K562 (cell line): ENCODE measurements at regions of chr14 and their contacts with region 1.

Region 1: GRCh38 chr14:95561001-95561412 is 26.2 kb downstream of the GLRX5 start:
- DNase-seq: peak; percentile 74 to 85 (median 80)
- ATAC-seq: peak; percentile 98
- H3K4me3 ChIP-seq: no peak overlapping the region
- H3K27ac ChIP-seq: no peak overlapping the region
- H3K4me1 ChIP-seq: no peaks in the 10 kb centered on the region; a peak in 1 of 5 replicates
- H3K27me3 ChIP-seq: 0 out of 5 replicates have a peak, but pooled peaks cover 0 to 12% of the 10 kb centered on the region in 2 experiments
- CTCF ChIP-seq: peak; percentile 97 to 98 (median 98)
- EP300 ChIP-seq: no peak
- POLR2A ChIP-seq: no peak
- RAD21 ChIP-seq: peak; percentile 81 to 94

Region 2: DNA sequence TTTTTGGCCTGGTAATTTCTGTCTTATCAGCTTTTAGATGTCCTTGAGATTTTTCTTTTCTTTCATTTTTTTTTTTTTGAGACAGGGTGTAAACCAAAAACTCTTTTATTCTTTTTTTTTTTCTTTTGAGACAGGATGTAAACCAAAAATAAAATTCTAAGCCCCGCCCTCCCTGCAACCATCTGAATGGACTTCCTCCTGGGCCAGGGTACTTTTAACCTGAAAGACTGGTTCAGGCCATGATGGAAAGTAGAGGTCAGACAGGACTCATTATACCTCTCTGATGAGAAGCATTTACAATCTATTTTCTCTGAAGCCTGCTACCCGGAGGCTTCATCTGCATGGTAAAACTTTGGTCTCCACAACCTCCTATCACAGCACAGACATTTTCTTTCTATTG is 91.7 kb after region 1 on chr14:
- CTCF ChIA-PET with region 1: no interaction called
- POLR2A ChIA-PET with region 1: no interaction called
- in situ Hi-C with region 1: no loop called
- intact Hi-C with region 1: no loop called
- DNase-seq: no peak
- ATAC-seq: no peak
- H3K4me3 ChIP-seq: no peak overlapping the region
- H3K27ac ChIP-seq: no peak overlapping the region
- H3K4me1 ChIP-seq: no peaks in the 10 kb centered on the region
- H3K27me3 ChIP-seq: no peaks in the 10 kb centered on the region; a peak in 1 of 5 replicates
- CTCF ChIP-seq: no peak
- EP300 ChIP-seq: no peak
- POLR2A ChIP-seq: no peak
- RAD21 ChIP-seq: no peak

Region 3: GRCh38 chr14:95683793-95684192 is 122.8 kb after region 1 on chr14:
- CTCF ChIA-PET with region 1: interaction called, 3 read pairs
- POLR2A ChIA-PET with region 1: no interaction called
- in situ Hi-C with region 1: no loop called
- intact Hi-C with region 1: loop called (anchors 10 kb)
- DNase-seq: peak in 1 of 4 experiments; percentile 4
- ATAC-seq: no peak
- H3K4me3 ChIP-seq: no peak overlapping the region
- H3K27ac ChIP-seq: no peak overlapping the region
- H3K4me1 ChIP-seq: peaks cover 0 to 5% of the 10 kb centered on the region in 2 experiments; a peak in 2 of 5 replicates
- H3K27me3 ChIP-seq: no peaks in the 10 kb centered on the region
- CTCF ChIP-seq: peak; percentile 21 to 37 (median 30); a peak in 3 of 6 replicates
- EP300 ChIP-seq: no peak
- POLR2A ChIP-seq: no peak
- RAD21 ChIP-seq: peak in 1 of 2 experiments; percentile 29; a peak in 1 of 4 replicates

Region 4: GRCh38 chr14:95871300-95871900 is 310.4 kb after region 1 on chr14:
- CTCF ChIA-PET with region 1: no interaction called
- POLR2A ChIA-PET with region 1: no interaction called
- in situ Hi-C with region 1: no loop called
- intact Hi-C with region 1: no loop called
- DNase-seq: no peak
- ATAC-seq: no peak
- H3K4me3 ChIP-seq: no peak overlapping the region
- H3K27ac ChIP-seq: no peak overlapping the region
- H3K4me1 ChIP-seq: peaks cover 0 to 2% of the 10 kb centered on the region in 2 experiments; a peak in 2 of 5 replicates
- H3K27me3 ChIP-seq: peaks cover 0 to 2% of the 10 kb centered on the region in 2 experiments; a peak in 1 of 5 replicates
- CTCF ChIP-seq: no peak
- EP300 ChIP-seq: no peak
- POLR2A ChIP-seq: no peak
- RAD21 ChIP-seq: no peak

Region 5: GRCh38 chr14:95993768-95994592 is 433.0 kb after region 1 on chr14:
- CTCF ChIA-PET with region 1: interaction called, 18 read pairs
- POLR2A ChIA-PET with region 1: no interaction called
- in situ Hi-C with region 1: loop called (anchors 5 kb)
- intact Hi-C with region 1: loop called (anchors 1 kb)
- DNase-seq: peak; percentile 42 to 50 (median 48)
- ATAC-seq: peak; percentile 50; the same call in 1 of the 3 replicates
- H3K4me3 ChIP-seq: no peak overlapping the region
- H3K27ac ChIP-seq: no peak overlapping the region
- H3K4me1 ChIP-seq: no peaks in the 10 kb centered on the region
- H3K27me3 ChIP-seq: no peaks in the 10 kb centered on the region
- CTCF ChIP-seq: peak; percentile 61 to 76 (median 62); a peak in 5 of 6 replicates
- EP300 ChIP-seq: no peak
- POLR2A ChIP-seq: no peak
- RAD21 ChIP-seq: peak; percentile 67 to 81

Region 6: GRCh38 chr14:96268431-96269358 is 707.7 kb after region 1 on chr14:
- CTCF ChIA-PET with region 1: no interaction called
- POLR2A ChIA-PET with region 1: no interaction called
- in situ Hi-C with region 1: loop called (anchors 25 kb)
- intact Hi-C with region 1: loop called (anchors 10 kb)
- DNase-seq: no peak
- ATAC-seq: no peak
- H3K4me3 ChIP-seq: no peak overlapping the region
- H3K27ac ChIP-seq: no peak overlapping the region
- H3K4me1 ChIP-seq: peaks cover 0 to 4% of the 10 kb centered on the region in 2 experiments; a peak in 2 of 5 replicates
- H3K27me3 ChIP-seq: peaks cover 3 to 41% of the 10 kb centered on the region in 2 experiments; a peak in 4 of 5 replicates
- CTCF ChIP-seq: no peak
- EP300 ChIP-seq: no peak
- POLR2A ChIP-seq: no peak
- RAD21 ChIP-seq: no peak

Region 7: GRCh38 chr14:96424109-96424989 is 863.3 kb after region 1 on chr14:
- CTCF ChIA-PET with region 1: interaction called, 4 read pairs
- POLR2A ChIA-PET with region 1: no interaction called
- in situ Hi-C with region 1: loop called (anchors 25 kb)
- intact Hi-C with region 1: loop called (anchors 10 kb)
- DNase-seq: peak; percentile 32 to 67 (median 36)
- ATAC-seq: peak; percentile 89
- H3K4me3 ChIP-seq: peak overlapping the region; percentile 30
- H3K27ac ChIP-seq: no peak overlapping the region
- H3K4me1 ChIP-seq: peaks cover 0 to 8% of the 10 kb centered on the region in 2 experiments; a peak in 2 of 5 replicates
- H3K27me3 ChIP-seq: no peaks in the 10 kb centered on the region
- CTCF ChIP-seq: peak; percentile 57 to 77 (median 65)
- EP300 ChIP-seq: no peak
- POLR2A ChIP-seq: no peak
- RAD21 ChIP-seq: peak; percentile 86 to 90